ENCODE measurements at regions of chr22 and their contacts with region 1.

Region 1: DNA sequence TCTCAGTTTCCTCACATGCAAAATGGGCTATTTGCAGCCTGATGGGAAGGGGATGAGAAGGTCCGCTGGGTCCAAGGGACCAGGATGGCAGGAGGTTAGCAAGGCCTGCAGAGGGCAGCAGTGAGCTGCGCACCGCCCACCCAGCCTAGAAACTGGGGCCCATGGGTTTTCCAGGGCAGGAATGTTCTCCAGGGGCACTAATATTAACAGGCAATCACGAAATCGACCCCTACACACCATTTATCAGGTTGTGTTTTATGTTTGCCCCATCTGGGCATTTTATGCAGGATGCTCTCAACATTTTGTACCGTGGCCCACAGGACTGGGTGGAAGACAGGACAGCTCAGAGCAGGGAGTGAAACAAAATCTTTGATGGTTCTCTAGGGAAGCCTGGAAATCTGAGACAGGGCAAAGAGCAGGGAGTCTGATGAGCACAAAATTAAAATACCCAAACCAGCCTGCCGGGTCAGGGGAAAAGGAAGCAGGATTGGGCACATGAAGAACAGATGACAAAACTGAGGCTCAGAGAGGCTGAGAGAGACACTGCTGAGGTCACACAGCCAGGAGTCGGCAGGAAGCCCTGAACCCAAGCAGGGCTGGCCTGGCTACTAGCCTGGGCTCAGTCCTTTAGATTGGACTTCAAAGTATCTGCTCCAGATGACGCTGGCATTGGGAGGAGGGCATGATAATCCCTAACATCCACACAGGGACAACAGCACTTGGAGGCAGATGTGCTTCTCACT is 1.6 kb upstream of the BCR start:
- DNase-seq: no peak
- H3K4me3 ChIP-seq: peak overlapping the region in 1 of 4 donors; percentile 89
- H3K27ac ChIP-seq: peak overlapping the region; percentile 86 to 93 (median 91)
- H3K4me1 ChIP-seq: peaks cover 34 to 68% (median 48%) of the 10 kb centered on the region in 3 donors
- H3K27me3 ChIP-seq: no peaks in the 10 kb centered on the region
- CTCF ChIP-seq: peak; percentile 95 to 98 (median 96)
- POLR2A ChIP-seq: no peak

Region 2: GRCh38 chr22:22450343-22450839 is 728.3 kb before region 1 on chr22:
- intact Hi-C with region 1: no loop called
- DNase-seq: no peak
- H3K4me3 ChIP-seq: no peak overlapping the region
- H3K27ac ChIP-seq: no peak overlapping the region
- H3K4me1 ChIP-seq: no peaks in the 10 kb centered on the region
- H3K27me3 ChIP-seq: peaks cover 0 to 51% (median 0%) of the 10 kb centered on the region in 4 donors
- CTCF ChIP-seq: no peak
- POLR2A ChIP-seq: no peak

Region 3: DNA sequence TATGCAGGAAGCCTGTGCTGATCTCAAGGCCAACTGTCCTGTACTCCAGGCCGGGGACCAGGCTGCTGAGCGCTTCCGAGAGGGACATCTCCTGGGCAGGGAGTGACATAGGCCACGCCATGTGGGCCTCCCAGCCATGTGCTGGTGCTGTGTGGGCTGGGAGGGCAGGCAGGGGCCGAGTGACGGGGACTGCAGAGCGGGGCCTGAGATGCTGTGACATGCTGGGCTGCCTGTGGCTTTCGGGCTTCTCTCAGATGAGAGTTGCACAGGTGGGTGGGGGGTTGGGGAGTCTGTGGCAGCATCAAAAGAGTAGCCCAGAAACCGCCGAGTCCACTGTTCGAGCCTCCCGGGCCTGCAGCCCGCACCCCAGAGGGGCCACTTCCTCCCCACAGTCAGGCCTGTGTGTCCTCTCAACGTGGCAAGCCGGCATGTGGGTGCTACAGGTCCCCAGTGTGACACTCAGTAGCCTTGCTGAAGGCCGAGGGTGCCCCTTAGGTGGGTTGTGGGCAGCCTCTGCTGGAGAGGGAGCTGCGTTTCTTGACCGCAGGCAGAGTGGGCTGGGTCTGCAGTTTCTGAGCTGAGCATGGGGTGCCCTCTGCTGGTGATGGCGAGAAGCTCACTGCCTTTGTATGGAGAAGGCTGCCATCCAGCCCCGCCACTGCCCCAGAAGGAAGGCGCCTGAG is 102.9 kb after region 1 on chr22:
- intact Hi-C with region 1: loop called (anchors 2 kb)
- DNase-seq: peak; percentile 27
- H3K4me3 ChIP-seq: peak overlapping the region in 2 of 4 donors; percentile 18 to 27
- H3K27ac ChIP-seq: peak overlapping the region; percentile 77 to 90 (median 84)
- H3K4me1 ChIP-seq: peaks cover 28 to 80% (median 49%) of the 10 kb centered on the region in 3 donors
- H3K27me3 ChIP-seq: no peaks in the 10 kb centered on the region
- CTCF ChIP-seq: peak; percentile 77 to 97 (median 92)
- POLR2A ChIP-seq: no peak

Measured in esophagus squamous epithelium (tissue), 5 donors.